ENCODE measurements at regions of chr12 and their contacts with region 1.

Region 1: DNA sequence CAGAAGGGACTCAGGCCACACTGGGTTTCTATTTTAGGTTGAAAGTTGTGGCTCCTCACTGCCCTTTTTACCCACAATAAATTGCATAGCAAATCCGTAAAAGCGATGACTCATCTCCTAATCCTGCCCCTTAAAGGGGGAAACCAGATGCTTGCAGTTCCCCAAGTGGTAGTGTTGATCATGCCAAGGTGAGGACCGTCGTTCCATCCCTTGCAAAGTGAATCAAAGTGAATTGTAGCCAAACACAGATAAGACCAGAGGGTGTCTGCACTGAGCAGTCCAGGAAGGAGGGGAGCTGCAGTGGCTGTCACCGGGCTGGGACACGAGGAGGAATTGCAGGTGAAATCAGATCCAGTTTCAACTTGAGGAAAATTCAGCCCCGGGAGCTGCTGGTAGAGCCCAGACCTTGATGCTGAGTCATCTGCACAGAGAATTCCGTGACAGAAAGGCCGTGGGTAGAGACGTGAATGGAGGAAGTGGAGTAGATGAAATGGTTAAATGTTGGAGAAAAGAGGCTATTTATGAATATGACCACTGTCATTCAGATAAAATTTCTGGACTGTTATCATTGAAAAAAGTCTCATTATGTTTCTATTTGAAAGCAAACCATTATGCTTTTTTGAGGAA is 44.2 kb upstream of the MMP17 start:
- DNase-seq: no peak
- ATAC-seq: peak; percentile 60
- H3K4me3 Mint-ChIP-seq: no peak overlapping the region
- H3K27ac Mint-ChIP-seq: peak overlapping the region; percentile 82
- H3K4me1 Mint-ChIP-seq: peaks cover 14% of the 10 kb centered on the region
- H3K27me3 Mint-ChIP-seq: no peaks in the 10 kb centered on the region
- CTCF ChIP-seq: no peak

Region 2: DNA sequence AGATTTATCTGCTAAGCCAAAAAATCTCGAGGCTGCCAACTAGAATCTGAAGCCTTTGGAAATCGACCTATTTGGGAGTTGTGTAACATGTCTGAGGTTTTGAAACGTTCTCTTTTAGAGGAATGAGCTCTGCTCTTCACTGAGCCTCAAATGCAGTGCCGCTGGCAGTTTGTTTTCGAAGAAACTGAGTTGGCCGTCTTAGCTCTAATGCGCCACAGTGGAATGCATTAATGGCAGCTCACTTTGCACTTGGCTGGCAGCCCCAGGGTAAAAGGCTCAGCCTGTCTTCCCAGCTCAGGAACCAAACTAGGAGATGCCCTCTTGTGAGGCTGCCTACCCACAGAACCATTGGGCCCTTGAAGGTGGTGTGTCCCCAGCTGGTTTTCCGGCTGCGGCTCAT is 19.3 kb before region 1 on chr12:
- CTCF ChIA-PET with region 1: no interaction called
- POLR2A ChIA-PET with region 1: no interaction called
- intact Hi-C with region 1: no loop called
- DNase-seq: no peak
- ATAC-seq: no peak
- H3K4me3 Mint-ChIP-seq: no peak overlapping the region
- H3K27ac Mint-ChIP-seq: no peak overlapping the region
- H3K4me1 Mint-ChIP-seq: peaks cover 30% of the 10 kb centered on the region
- H3K27me3 Mint-ChIP-seq: no peaks in the 10 kb centered on the region
- CTCF ChIP-seq: no peak

Region 3: DNA sequence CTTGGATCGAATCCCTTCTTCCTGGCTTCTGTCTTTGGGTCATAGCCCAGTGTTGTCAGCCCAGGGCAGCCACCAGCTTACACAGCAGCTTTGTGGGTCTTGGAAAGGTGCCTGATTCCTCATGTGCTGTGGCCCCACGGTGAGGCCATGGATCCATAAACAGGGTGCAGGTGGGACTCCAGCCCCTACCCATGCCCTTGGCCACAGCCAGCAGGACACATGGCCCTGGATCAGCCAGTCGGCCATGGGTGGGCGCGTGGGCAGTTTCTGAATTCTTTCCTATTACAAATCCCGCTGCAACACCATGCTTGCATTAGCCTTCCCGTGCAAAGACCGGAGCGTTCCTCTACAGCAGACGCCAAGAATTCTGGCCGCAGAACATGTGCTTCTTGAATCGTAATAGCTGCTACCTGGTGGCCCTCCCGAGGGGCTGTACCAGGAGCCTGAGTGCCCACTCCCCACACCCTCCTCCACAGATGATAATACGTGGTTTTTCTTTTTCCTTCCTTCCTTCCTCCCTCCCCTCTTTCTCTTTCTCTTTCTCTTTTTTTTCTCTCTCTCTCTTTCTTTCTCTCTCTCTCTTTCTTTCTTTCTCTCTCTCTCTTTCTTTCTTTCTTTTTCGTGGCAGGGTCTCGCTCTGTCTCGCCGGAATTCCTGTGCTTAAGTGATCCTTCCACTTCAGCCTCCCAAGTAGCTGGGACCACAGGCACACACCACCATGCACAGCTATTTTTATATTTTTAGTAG is 41.3 kb after region 1 on chr12:
- CTCF ChIA-PET with region 1: no interaction called
- POLR2A ChIA-PET with region 1: interaction called, 21 read pairs
- intact Hi-C with region 1: no loop called
- DNase-seq: no peak
- ATAC-seq: no peak
- H3K4me3 Mint-ChIP-seq: no peak overlapping the region
- H3K27ac Mint-ChIP-seq: peak overlapping the region; percentile 24
- H3K4me1 Mint-ChIP-seq: peaks cover 47% of the 10 kb centered on the region
- H3K27me3 Mint-ChIP-seq: peaks cover 4% of the 10 kb centered on the region
- CTCF ChIP-seq: no peak